SK-N-SH (cell line): ENCODE measurements at regions of chr17 and their contacts with region 1.

Region 1: GRCh38 chr17:80468242-80468641 is 8.2 kb downstream of the NPTX1 start:
- DNase-seq: peak; percentile 62
- H3K4me3 ChIP-seq: no peak overlapping the region
- H3K27ac ChIP-seq: no peak overlapping the region
- H3K4me1 ChIP-seq: peaks cover 0 to 9% of the 10 kb centered on the region in 2 experiments; a peak in 1 of 4 replicates
- H3K27me3 ChIP-seq: peaks cover 94% of the 10 kb centered on the region
- CTCF ChIP-seq: no peak
- EP300 ChIP-seq: no peak
- RAD21 ChIP-seq: no peak

Region 2: GRCh38 chr17:80349151-80349651 is 119.0 kb before region 1 on chr17:
- CTCF ChIA-PET with region 1: no interaction called
- POLR2A ChIA-PET with region 1: no interaction called
- DNase-seq: no peak
- H3K4me3 ChIP-seq: no peak overlapping the region
- H3K27ac ChIP-seq: no peak overlapping the region
- H3K4me1 ChIP-seq: no peaks in the 10 kb centered on the region
- H3K27me3 ChIP-seq: no peaks in the 10 kb centered on the region
- CTCF ChIP-seq: no peak
- EP300 ChIP-seq: no peak
- RAD21 ChIP-seq: no peak

Region 3: GRCh38 chr17:80454557-80455335 is 13.5 kb before region 1 on chr17:
- CTCF ChIA-PET with region 1: interaction called, 15 read pairs
- POLR2A ChIA-PET with region 1: interaction called, 24 read pairs
- DNase-seq: peak; percentile 100
- H3K4me3 ChIP-seq: peak overlapping the region; percentile 71 to 78
- H3K27ac ChIP-seq: peak overlapping the region; percentile 79 to 97
- H3K4me1 ChIP-seq: peaks cover 0 to 34% of the 10 kb centered on the region in 2 experiments; a peak in 1 of 4 replicates
- H3K27me3 ChIP-seq: no peaks in the 10 kb centered on the region
- CTCF ChIP-seq: no peak; the same call in 1 of the 2 replicates
- EP300 ChIP-seq: no peak
- RAD21 ChIP-seq: no peak